Breast epithelium (tissue), 4 donors: ENCODE measurements at regions of chr18 and their contacts with region 1.

Region 1: DNA sequence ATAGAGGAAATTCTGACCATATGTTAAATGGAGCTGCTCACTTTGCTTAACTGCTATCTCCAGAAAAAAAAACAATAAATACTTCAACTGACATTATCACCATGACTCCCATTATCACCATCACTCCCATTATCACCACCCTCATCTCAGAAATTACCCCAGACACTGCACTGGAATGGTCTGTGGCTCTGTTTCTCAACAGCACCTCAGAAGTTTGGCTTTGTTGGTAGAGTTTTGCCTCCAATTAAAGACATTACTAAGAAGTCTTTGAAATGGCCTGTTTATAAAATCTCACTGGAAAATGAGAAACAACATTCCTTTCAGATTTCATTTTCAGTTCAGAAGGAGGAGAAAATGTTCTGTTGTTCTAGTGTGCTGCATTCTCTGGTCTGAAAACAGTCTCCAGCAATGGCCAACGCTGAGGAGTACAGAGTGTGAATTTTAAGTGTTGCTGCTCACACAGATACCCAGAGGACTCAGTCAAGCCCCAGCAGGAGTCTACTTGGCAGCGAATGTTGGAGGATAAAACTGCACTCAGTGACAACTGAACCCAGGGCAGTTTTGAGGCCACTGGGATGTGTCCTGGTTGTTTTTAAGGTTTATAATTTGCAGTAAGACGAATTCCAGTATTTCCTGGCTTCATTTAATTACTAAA is 364.5 kb upstream of the CDH2 start:
- DNase-seq: peak in 1 of 2 donors; percentile 17
- H3K4me3 ChIP-seq: peak overlapping the region in 1 of 3 donors; percentile 23
- H3K27ac ChIP-seq: no peak overlapping the region
- H3K4me1 ChIP-seq: no peaks in the 10 kb centered on the region
- H3K27me3 ChIP-seq: no peaks in the 10 kb centered on the region
- CTCF ChIP-seq: no peak
- POLR2A ChIP-seq: no peak

Region 2: GRCh38 chr18:27713738-27714095 is 827.7 kb before region 1 on chr18:
- intact Hi-C with region 1: no loop called
- DNase-seq: no peak
- H3K4me3 ChIP-seq: no peak overlapping the region
- H3K27ac ChIP-seq: no peak overlapping the region
- H3K4me1 ChIP-seq: no peaks in the 10 kb centered on the region
- H3K27me3 ChIP-seq: no peaks in the 10 kb centered on the region
- CTCF ChIP-seq: no peak
- POLR2A ChIP-seq: no peak

Region 3: GRCh38 chr18:27901424-27902226 is 639.8 kb before region 1 on chr18:
- intact Hi-C with region 1: loop called (anchors 5 kb)
- DNase-seq: no peak
- H3K4me3 ChIP-seq: no peak overlapping the region
- H3K27ac ChIP-seq: no peak overlapping the region
- H3K4me1 ChIP-seq: no peaks in the 10 kb centered on the region
- H3K27me3 ChIP-seq: no peaks in the 10 kb centered on the region
- CTCF ChIP-seq: no peak
- POLR2A ChIP-seq: no peak

Region 4: GRCh38 chr18:27996801-27997228 is 544.6 kb before region 1 on chr18:
- intact Hi-C with region 1: no loop called
- DNase-seq: no peak
- H3K4me3 ChIP-seq: no peak overlapping the region
- H3K27ac ChIP-seq: no peak overlapping the region
- H3K4me1 ChIP-seq: no peaks in the 10 kb centered on the region
- H3K27me3 ChIP-seq: no peaks in the 10 kb centered on the region
- CTCF ChIP-seq: no peak
- POLR2A ChIP-seq: no peak

Region 5: DNA sequence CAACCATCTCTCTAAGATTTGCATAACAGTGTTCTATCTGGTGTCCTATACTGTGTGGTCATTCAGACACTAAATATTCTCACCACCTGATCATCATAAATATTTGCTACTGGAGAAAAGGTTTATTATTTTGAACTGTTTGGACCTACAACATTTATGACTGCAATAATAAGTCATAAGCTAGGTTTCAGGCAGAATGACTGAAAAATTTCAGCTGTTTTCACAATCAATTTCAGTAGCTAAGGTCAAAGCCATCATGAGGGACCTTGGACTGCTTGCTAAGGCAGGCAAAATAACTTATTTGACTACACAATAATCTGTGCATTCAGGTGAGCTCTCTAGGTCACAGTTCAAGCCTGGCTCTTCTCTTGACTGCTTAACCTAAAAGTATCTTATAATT is 61.0 kb after region 1 on chr18:
- intact Hi-C with region 1: no loop called
- DNase-seq: no peak
- H3K4me3 ChIP-seq: no peak overlapping the region
- H3K27ac ChIP-seq: no peak overlapping the region
- H3K4me1 ChIP-seq: no peaks in the 10 kb centered on the region
- H3K27me3 ChIP-seq: no peaks in the 10 kb centered on the region
- CTCF ChIP-seq: no peak
- POLR2A ChIP-seq: no peak